ENCODE measurements at regions of chr6 and their contacts with region 1.

Region 1: DNA sequence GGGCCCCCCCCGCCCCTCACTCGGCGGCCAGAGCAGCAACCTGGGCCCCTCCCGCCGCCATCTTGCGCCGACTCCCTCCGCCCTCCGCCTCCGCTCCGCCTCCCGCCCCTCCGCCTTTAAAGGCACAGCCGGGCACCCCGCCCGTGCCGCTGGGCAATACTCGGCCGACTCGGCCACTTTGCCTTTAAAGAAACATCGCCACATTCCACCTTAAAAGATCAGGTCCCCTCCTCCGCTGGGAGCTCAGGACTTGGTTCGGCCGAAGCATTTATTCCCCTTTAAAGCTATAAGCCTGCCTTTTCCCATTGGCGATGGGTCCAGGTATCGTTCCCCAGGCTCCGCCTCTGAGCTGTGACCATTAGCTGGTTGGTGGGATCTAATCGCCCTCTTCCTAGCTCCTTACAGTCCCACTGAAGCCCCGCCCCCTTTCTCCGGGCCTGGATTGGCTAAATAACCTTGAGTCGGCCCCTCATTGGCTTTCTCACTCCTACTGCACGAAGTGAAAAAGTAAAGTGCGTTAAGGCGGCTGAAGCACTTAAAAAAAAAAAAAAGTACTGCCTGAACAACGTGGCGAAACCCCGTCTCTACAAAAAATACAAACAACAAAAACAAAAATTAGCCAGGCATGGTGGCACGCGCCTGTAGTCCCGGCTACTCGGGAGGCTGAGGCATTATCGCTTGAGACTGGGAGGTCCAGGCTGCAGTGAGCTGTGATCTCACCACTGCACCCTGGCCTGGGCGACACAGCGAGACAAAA is at the start of gene ZBTB22:
- DNase-seq: peak; percentile 91
- ATAC-seq: peak; percentile 59
- H3K4me3 Mint-ChIP-seq: peak within 1 kb of the TSS; percentile 99
- H3K27ac Mint-ChIP-seq: peak within 1 kb of the TSS; percentile 98
- H3K4me1 Mint-ChIP-seq: peaks cover 84% of the 10 kb centered on the region
- H3K27me3 Mint-ChIP-seq: no peaks in the 10 kb centered on the region
- CTCF ChIP-seq: no peak
- total RNA-seq, gene ZBTB22: 31.6 and 31.8 TPM in 2 replicates

Region 2: DNA sequence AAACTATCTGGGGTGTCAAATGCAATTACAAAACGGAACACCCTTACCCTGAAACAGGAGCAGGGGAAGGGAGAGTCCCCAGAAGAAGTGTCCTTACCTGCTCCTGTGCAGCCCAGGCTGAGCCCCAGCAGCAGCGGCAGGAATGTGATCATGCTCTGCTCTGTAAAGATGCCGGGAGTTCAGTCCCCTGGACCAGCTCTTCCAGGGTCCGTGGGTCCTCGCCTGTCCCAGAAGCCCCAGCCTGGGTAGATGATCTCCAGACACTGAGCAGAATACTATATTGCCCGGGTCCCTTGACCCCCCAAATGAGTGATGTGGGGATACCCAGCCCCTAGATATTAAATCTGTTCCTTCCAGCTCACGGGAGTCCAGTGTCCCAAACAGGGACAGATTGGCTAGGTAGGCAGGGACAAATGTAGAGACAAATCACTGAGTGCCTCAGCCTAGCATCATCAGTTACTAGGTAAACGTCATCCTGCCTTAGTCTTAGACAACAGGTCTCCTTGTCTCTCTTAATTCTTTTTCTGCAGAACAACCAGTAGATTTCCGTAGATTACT is 377.1 kb before region 1 on chr6 and contains the start of gene HLA-DMB:
- CTCF ChIA-PET with region 1: no interaction called
- POLR2A ChIA-PET with region 1: interaction called, 4 read pairs
- intact Hi-C with region 1: loop called (anchors 5 kb)
- DNase-seq: peak; percentile 53
- ATAC-seq: peak; percentile 60
- H3K4me3 Mint-ChIP-seq: peak within 1 kb of the TSS; percentile 98
- H3K27ac Mint-ChIP-seq: peak within 1 kb of the TSS; percentile 99
- H3K4me1 Mint-ChIP-seq: peaks cover 85% of the 10 kb centered on the region
- H3K27me3 Mint-ChIP-seq: no peaks in the 10 kb centered on the region
- CTCF ChIP-seq: no peak
- total RNA-seq, gene HLA-DMB: 341 and 365 TPM in 2 replicates

Region 3: DNA sequence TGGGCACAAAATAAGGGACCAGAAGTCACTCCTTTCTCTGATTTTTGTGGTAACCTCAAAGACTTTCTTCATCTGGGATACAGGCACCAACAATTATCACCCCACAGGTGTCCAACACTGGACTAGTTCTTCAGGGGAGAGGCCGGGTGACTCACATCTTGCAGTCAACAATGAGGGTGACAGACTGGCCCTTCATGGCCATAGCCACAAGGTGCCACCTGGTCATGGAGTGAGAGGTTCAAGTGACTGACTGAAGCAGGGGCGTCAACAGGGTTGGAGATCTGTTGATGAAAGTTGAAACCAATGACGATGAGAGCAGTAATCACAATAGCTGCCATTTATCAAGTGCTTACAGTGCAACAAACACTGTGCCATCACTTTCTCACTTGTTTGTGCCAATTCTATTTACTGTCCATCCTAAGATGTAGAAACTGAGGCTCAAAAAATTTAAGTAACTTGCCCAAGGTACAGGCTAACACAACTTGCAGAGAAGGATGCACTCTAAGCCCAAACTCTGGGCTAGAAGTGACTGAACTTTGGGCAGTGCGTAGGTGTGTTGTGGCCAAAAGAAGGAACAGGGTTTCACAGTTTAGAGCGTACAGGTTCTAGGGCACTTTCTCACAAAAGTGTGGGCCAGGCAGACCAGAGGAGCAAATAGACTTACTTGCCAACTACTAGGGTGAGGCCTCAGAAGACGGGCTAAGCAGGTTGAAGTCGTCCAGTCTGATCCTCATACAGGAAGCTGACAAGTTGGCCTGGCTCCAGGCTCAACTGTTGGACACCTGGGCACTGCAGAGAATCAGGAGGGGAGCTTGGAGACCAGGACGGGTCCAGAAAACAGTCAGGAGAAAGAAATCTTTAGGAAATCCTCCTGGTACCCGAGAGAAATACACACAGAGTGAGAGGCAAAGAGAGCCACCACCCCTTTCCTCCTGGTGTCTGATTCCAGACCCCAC is 211.7 kb before region 1 on chr6:
- CTCF ChIA-PET with region 1: no interaction called
- POLR2A ChIA-PET with region 1: no interaction called
- intact Hi-C with region 1: no loop called
- DNase-seq: no peak
- ATAC-seq: no peak
- H3K4me3 Mint-ChIP-seq: no peak overlapping the region
- H3K27ac Mint-ChIP-seq: no peak overlapping the region
- H3K4me1 Mint-ChIP-seq: peaks cover 3% of the 10 kb centered on the region
- H3K27me3 Mint-ChIP-seq: no peaks in the 10 kb centered on the region
- CTCF ChIP-seq: no peak

Region 4: GRCh38 chr6:33288921-33289748 is 28.7 kb before region 1 on chr6 and contains the starts of genes PFDN6 and WDR46:
- CTCF ChIA-PET with region 1: interaction called, 3 read pairs
- POLR2A ChIA-PET with region 1: interaction called, 22 read pairs
- intact Hi-C with region 1: loop called (anchors 1 kb)
- DNase-seq: peak; percentile 66
- ATAC-seq: peak; percentile 94
- H3K4me3 Mint-ChIP-seq: peak within 1 kb of the TSS; percentile 100
- H3K27ac Mint-ChIP-seq: peak within 1 kb of the TSS; percentile 95
- H3K4me1 Mint-ChIP-seq: peaks cover 48% of the 10 kb centered on the region
- H3K27me3 Mint-ChIP-seq: no peaks in the 10 kb centered on the region
- CTCF ChIP-seq: no peak
- total RNA-seq, gene PFDN6: 82.8 and 95.1 TPM in 2 replicates
- total RNA-seq, gene WDR46: 114 and 117 TPM in 2 replicates

Region 5: DNA sequence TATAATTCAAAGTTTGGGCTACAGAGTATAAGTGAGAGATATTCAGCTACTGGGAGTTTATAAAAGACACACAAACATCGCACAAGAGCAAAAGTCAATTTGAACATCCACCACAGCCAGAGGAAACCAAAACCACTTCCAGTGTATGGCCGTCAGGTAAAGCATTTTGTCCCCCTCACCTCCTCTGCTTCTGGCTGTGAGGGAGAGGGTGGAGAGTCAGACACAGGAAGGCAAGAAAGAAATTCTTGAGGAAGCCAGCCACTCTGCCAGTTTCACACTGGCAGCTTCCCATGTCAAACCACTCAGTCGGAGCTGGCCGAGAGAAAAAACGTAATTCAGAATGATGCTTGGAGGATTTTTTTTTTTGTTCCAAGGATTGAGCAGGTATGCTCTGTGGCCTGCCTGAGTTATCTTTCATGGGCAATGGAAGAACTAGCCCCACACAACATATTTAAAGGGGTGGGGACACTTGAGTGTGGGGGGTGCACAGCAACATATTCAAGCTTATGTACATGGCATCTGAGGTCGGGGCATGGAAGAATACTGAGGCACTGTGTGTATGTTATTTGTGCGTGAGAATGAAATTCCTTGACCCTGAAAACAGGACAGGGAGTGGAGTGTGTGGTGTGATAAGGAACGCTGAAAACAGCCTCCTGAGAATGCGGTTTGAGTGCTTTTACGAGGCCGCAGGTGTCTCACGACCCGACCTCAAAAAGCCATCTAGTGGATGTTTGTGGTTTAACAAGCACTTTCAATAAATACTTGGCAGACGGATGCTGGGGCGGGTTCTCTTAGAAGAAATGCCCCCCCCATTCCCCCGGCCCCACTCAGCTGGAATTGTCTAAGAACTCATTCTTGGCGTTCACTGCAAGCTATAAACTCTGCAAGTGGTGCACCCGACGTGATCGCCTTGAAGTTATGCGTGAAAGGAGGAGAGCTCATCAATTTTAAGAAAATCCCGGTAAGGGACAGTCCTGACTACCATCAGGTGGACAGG is 27.2 kb after region 1 on chr6:
- CTCF ChIA-PET with region 1: interaction called, 17 read pairs
- POLR2A ChIA-PET with region 1: interaction called, 102 read pairs
- intact Hi-C with region 1: loop called (anchors 1 kb)
- DNase-seq: peak; percentile 31
- ATAC-seq: peak; percentile 35
- H3K4me3 Mint-ChIP-seq: peak overlapping the region; percentile 80
- H3K27ac Mint-ChIP-seq: peak overlapping the region; percentile 92
- H3K4me1 Mint-ChIP-seq: peaks cover 35% of the 10 kb centered on the region
- H3K27me3 Mint-ChIP-seq: no peaks in the 10 kb centered on the region
- CTCF ChIP-seq: no peak

Region 6: DNA sequence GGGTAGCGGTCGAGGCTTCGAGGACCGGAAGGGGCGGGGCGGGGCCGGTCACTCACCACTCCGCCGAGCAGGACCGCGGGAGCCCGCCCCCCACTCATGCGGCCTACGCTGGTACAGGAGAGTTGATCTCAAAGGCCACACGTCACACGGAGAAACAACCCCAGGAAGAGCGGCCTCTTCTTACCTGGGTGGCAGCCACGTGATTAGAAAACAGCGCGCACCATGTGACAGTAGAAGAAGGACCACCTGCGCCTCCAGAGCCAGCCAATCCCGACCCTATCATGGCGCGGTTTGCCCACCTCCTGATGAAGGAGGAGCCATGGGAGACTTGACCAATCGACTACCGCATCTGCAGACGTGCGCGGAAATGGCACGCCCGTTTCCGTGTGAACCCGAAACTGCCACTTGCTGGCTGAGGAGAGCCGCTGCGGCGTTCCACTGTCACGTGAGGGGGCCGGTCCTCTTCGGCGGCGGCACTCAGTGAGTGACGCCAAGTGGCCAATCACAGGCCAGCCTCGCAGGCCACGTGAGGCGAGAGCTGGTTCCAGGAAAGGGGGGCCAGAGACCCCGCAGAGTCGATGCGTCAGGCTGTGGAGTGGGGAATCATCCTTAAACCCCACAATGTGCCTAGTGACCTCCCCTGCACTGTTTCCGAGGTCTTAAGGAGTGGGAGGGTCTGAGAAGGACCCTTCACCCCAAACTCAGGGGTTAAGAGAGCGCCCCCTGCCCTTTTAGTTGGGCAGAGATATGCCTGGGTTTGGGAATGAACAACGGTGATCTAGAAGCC is 100.2 kb after region 1 on chr6 and contains the start of gene CUTA:
- CTCF ChIA-PET with region 1: no interaction called
- POLR2A ChIA-PET with region 1: interaction called, 9 read pairs
- intact Hi-C with region 1: loop called (anchors 1 kb)
- DNase-seq: peak; percentile 92
- ATAC-seq: peak; percentile 90
- H3K4me3 Mint-ChIP-seq: peak within 1 kb of the TSS; percentile 91
- H3K27ac Mint-ChIP-seq: peak within 1 kb of the TSS; percentile 96
- H3K4me1 Mint-ChIP-seq: peaks cover 66% of the 10 kb centered on the region
- H3K27me3 Mint-ChIP-seq: no peaks in the 10 kb centered on the region
- CTCF ChIP-seq: no peak
- total RNA-seq, gene CUTA: 111 and 120 TPM in 2 replicates

Region 7: DNA sequence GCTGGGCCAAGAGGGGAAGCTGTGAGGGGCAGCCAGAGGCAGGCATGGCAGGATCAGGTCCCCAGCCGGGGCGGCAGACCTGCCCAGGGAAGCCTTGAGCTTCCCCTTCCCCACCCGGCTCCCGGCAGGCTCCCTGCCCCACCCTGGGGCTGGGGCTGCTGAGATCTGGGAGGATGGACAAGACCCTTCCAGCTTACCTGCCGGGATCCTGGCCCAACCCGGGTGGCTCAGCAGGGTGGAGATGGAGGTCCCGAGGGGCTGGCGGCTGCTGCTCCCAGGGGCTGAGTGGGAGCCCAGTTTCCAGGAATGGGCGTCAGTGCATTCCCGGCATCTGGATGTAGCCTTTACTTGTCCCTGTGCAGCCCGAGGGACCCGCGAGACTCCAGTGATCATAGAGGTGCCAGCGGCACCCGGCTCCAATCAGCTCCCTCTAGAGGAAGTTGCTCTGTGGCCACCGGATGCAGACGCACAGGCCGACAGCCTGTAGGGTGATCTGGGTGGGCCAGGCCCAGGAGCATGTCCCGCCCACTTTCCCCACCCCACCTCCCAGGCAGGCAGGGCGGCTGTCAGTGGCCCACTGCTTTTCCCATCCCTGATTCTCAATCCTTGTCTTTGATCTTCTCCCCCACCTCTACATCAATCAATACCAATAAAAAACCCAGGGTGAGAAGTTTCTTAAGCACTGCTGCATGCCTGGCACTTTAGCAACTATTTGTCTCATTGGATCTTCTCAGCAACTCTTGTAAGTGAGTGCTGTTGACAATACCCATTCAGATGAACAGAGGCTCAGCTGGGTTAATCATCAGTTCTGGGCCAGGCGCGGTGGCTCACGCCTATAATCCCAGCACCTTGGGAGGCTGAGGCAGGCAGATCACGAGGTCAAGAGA is 262.2 kb after region 1 on chr6 and contains the start of gene BAK1:
- CTCF ChIA-PET with region 1: no interaction called
- POLR2A ChIA-PET with region 1: interaction called, 10 read pairs
- intact Hi-C with region 1: no loop called
- DNase-seq: peak; percentile 72
- ATAC-seq: peak; percentile 97
- H3K4me3 Mint-ChIP-seq: peak within 1 kb of the TSS; percentile 88
- H3K27ac Mint-ChIP-seq: peak within 1 kb of the TSS; percentile 89
- H3K4me1 Mint-ChIP-seq: peaks cover 45% of the 10 kb centered on the region
- H3K27me3 Mint-ChIP-seq: no peaks in the 10 kb centered on the region
- CTCF ChIP-seq: no peak
- total RNA-seq, gene BAK1: 29.5 and 29.6 TPM in 2 replicates